ENCODE measurements at regions of chr3 and their contacts with region 1.

Region 1: DNA sequence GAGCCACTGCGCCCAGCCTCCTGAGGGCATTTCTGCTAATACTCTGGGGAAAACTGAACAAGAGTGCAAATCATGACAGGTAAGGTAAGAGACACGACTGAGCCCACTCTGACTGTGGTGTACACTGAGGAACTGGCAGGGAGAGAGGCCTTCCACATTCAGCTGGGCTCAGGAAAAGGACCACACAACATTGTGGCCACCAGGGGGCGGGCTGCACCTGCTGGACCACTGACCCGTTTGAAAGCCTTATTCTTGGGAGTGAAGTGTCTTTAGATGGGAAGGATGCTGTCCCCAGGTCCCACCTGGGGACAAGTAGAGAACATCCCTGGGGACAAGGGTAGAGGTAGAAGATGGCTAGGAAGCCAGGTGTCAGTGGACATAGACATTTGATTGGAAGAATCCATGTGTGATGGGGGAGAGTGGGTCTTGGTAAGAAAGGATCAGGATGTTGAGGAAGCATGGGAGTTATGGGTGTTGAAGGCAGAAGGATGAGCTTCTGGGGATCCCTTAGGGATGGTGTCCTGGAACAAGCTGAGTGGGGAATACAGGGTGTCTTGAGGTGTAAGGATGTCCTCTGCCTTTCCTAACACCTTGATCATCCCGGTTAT is 6.2 kb upstream of the CTDSPL start:
- DNase-seq: no peak
- H3K4me3 ChIP-seq: no peak overlapping the region
- H3K27ac ChIP-seq: no peak overlapping the region
- H3K27me3 ChIP-seq: no peaks in the 10 kb centered on the region
- CTCF ChIP-seq: peak; percentile 88

Region 2: GRCh38 chr3:37956723-37957528 is 101.5 kb after region 1 on chr3:
- CTCF ChIA-PET with region 1: interaction called, 241 read pairs
- POLR2A ChIA-PET with region 1: no interaction called
- DNase-seq: no peak
- H3K4me3 ChIP-seq: no peak overlapping the region
- H3K27ac ChIP-seq: no peak overlapping the region
- H3K27me3 ChIP-seq: no peaks in the 10 kb centered on the region
- CTCF ChIP-seq: no peak

Region 3: DNA sequence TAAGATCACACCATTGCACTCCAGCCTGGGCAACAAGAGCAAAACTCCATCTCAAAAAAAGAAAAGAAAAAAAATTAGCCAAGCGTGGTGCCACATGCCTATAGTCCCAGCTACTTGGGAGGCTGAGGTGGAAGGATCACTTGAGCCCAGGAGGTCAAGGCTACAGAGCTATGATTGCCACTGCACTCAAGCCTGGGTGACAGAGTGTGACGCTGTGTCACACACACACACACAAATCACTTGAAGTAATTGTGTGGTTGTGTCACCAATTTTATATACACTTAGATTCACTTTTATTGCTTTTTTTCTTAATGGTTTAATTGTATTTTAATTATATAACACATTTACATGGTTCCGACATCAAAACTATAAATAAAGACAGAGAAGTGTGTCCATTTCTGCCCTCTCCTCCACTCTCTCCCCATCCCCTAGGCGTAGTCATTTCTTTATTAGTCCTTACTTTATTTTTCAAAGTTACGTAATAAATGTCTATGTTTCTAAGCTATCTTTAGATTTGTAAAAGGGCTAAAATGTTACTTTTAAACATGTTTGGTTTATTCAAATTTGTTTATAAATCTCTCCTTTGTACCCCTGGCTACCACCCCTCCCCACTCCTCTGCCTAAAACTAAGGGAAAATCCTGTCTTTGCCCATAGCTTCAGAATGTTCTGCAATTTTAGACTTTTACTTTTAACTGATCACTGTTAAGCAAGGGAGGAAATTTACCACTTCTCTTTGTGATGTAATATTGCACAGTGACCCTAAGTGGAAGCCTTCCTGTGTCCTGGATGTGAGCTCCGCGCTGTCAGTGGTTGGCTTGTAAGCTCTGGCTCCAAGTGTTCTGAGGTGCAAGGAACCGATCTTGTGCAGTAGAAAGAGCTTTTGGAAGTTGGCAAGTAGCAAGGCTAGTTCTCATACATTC is 124.3 kb after region 1 on chr3:
- CTCF ChIA-PET with region 1: interaction called, 59 read pairs
- POLR2A ChIA-PET with region 1: interaction called, 4 read pairs
- DNase-seq: no peak
- H3K4me3 ChIP-seq: no peak overlapping the region
- H3K27ac ChIP-seq: no peak overlapping the region
- H3K27me3 ChIP-seq: no peaks in the 10 kb centered on the region
- CTCF ChIP-seq: no peak

Region 4: DNA sequence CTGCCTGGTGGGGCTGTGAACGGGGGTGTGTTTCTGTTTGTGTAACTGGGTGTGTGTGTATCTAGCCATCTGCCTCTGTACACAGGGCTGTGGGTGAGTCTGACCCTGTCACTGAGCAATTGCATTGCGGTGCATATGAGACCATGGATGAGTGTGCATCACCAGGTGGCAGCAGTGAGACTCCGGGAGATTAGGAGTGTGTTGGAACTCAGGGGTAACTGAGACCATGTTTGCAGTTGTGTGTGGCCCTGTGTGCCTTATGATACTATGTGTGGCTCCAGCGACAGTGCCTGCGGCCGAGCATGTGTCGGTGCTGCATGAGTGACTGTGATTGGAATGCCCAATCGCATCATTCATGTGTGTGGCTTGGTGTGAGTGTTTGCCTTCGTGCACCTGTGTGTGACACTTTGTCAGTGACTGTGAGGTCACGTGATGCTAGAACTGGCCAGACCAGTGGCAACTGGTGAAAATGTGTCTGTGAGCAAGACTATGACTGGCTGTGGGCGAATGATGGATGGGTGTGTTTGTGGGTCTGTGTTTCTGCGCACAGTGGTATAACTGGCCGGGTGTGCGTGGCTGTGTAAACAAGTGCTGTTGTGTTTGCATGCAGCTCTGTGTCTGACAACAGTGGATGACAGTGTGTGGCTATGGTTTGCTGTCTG is 149.1 kb after region 1 on chr3:
- CTCF ChIA-PET with region 1: interaction called, 68 read pairs
- POLR2A ChIA-PET with region 1: no interaction called
- DNase-seq: no peak
- H3K4me3 ChIP-seq: no peak overlapping the region
- H3K27ac ChIP-seq: no peak overlapping the region
- H3K27me3 ChIP-seq: no peaks in the 10 kb centered on the region
- CTCF ChIP-seq: peak; percentile 78